H1 (cell line): ENCODE measurements at regions of chr6 and their contacts with region 1.

Region 1: DNA sequence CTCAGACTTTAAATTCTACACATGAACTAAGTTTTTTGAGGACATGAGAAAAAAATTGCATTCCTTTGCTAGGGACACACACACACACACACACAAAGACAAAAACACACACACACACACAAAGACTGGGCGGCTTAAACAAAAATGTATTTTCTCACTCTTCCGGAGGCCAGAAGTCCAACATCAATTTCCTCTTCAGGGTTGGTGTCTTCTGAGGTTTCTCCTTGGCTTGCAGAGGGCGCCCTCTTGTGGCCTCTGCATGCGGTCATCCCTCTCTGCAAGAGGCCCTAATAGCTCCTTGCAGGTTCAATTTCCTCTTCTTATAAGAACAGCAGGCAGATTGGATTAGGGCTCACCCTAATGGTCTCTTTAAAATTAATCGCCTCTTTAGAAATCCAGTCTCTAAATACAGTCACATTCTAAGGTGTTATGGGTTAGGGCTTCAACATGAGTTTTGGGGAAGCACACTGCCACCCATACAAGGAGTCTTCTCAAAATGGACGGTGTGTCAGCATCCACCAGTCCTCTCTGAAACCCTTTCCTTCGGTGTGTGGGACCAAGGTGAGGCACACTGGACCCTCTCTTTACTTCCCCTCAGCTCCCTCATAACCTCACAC is 61.4 kb downstream of the GPR6 start:
- DNase-seq: peak; percentile 84 to 86
- H3K4me3 ChIP-seq: peak overlapping the region; percentile 13 to 44 (median 26); a peak in 6 of 8 replicates
- H3K27ac ChIP-seq: no peak overlapping the region
- H3K4me1 ChIP-seq: peaks cover 0 to 3% (median 3%) of the 10 kb centered on the region in 4 experiments; a peak in 5 of 7 replicates
- H3K27me3 ChIP-seq: no peaks in the 10 kb centered on the region
- CTCF ChIP-seq: peak; percentile 79 to 94 (median 86)
- EP300 ChIP-seq: no peak
- POLR2A ChIP-seq: no peak
- RAD21 ChIP-seq: peak; percentile 94 to 96

Region 2: DNA sequence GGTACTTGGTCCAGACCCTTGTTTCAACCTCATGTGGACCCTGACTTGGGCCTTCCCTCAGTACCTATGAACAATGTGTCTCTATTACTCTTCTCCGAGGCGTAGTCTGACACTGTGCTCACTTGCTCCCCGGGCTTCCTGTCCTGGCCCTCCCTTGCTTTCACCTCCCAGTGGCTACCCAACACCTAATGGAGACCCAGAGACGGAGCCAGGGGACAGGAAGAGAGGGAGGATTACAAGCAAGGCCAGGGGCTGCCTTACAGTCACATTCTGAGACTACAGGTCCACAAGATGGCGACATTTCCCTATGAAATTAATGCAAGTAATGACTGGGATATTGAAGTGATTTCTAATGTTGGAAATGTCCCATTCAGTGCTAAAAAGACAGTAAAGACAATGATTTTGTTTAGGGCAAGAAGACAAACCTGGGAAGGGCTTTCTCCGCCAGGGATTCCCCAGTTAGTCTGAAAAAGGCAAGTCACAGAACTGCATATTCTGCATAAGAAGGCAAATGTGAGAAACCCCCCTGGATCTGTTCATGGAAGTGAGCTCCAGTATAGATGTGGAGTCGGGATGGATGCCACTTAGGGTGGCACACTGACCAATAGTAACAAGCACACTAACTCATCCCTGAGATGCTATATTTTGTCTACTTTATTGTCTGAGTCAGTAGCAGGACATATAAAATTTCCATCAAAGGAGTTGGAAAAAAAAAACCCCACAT is 512.4 kb before region 1 on chr6:
- CTCF ChIA-PET with region 1: interaction called, 11 read pairs
- POLR2A ChIA-PET with region 1: no interaction called
- DNase-seq: peak in 1 of 2 experiments; percentile 64
- H3K4me3 ChIP-seq: no peak overlapping the region
- H3K27ac ChIP-seq: no peak overlapping the region
- H3K4me1 ChIP-seq: peaks cover 0 to 3% (median 0%) of the 10 kb centered on the region in 4 experiments; a peak in 1 of 7 replicates
- H3K27me3 ChIP-seq: no peaks in the 10 kb centered on the region
- CTCF ChIP-seq: peak; percentile 36 to 74 (median 67)
- EP300 ChIP-seq: no peak
- POLR2A ChIP-seq: no peak
- RAD21 ChIP-seq: peak; percentile 83 to 85

Region 3: DNA sequence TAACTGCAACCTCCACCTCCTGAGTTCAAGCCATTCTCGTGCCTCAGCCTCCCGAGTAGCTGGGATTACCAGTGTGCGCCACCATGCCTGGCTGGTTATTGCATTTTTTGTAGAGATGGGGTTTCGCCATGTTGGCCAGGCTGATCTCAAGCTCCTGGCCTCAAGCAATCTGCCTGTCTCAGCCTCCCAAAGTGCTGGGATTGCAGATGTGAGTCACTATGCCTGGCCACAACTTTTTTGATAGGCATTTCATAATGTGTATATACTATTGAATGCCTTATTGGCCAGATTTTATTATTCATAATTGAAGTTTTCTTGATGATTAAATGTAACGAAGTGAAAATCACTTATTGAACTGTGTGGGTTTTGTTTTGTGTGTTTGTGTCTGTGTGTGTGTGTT is 320.5 kb before region 1 on chr6:
- CTCF ChIA-PET with region 1: interaction called, 19 read pairs
- POLR2A ChIA-PET with region 1: no interaction called
- DNase-seq: no peak
- H3K4me3 ChIP-seq: no peak overlapping the region
- H3K27ac ChIP-seq: no peak overlapping the region
- H3K4me1 ChIP-seq: no peaks in the 10 kb centered on the region
- H3K27me3 ChIP-seq: peaks cover 0 to 1% (median 0%) of the 10 kb centered on the region in 4 experiments; a peak in 1 of 7 replicates
- CTCF ChIP-seq: no peak
- EP300 ChIP-seq: no peak
- POLR2A ChIP-seq: no peak
- RAD21 ChIP-seq: no peak

Region 4: DNA sequence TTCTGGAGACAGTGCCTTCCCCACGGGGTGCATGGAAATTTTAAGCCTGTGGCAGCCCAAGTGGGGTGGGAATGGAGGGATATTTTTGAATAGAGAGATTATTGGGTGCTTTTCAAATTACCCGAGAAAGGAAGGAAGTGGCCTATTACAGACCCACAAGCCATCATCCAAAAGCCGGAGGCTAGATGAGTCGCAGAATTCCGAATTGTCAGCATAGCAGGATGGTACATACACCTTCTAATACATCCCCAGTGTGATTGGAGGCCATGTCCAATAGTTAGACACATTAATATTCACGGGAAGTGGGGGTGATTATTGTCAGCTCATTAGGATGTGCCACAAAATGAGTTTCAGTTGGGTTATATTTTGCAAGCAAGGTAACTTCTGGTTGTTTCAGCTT is 215.4 kb before region 1 on chr6:
- CTCF ChIA-PET with region 1: interaction called, 11 read pairs
- POLR2A ChIA-PET with region 1: no interaction called
- DNase-seq: no peak
- H3K4me3 ChIP-seq: no peak overlapping the region
- H3K27ac ChIP-seq: no peak overlapping the region
- H3K4me1 ChIP-seq: peaks cover 0 to 8% (median 3%) of the 10 kb centered on the region in 4 experiments; a peak in 5 of 7 replicates
- H3K27me3 ChIP-seq: no peaks in the 10 kb centered on the region
- CTCF ChIP-seq: no peak
- EP300 ChIP-seq: no peak
- POLR2A ChIP-seq: no peak
- RAD21 ChIP-seq: no peak

Region 5: DNA sequence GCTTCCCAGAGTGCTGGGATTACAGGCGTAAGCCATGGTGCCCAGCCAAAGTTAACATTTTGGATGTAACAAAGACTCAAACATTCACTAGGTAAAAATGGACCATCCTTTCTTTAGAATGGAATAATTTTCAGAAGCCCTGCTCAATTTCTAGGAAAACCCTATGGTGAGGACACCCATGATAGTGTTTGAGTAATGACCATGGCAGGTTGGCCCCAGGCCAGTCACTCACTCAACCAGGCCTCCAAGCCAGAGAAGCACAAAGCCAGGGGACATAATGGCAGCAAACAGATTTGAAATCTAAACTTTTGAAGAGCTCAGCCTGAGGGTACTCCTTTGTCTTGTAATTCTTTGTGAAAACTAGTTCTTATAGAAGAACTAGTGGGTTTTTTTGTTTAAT is 121.2 kb before region 1 on chr6:
- CTCF ChIA-PET with region 1: interaction called, 11 read pairs
- POLR2A ChIA-PET with region 1: no interaction called
- DNase-seq: no peak
- H3K4me3 ChIP-seq: no peak overlapping the region
- H3K27ac ChIP-seq: no peak overlapping the region
- H3K4me1 ChIP-seq: no peaks in the 10 kb centered on the region
- H3K27me3 ChIP-seq: no peaks in the 10 kb centered on the region
- CTCF ChIP-seq: no peak
- EP300 ChIP-seq: no peak
- POLR2A ChIP-seq: no peak
- RAD21 ChIP-seq: no peak

Region 6: GRCh38 chr6:110020888-110021287 is 18.6 kb before region 1 on chr6:
- CTCF ChIA-PET with region 1: interaction called, 35 read pairs
- POLR2A ChIA-PET with region 1: no interaction called
- DNase-seq: no peak
- H3K4me3 ChIP-seq: no peak overlapping the region
- H3K27ac ChIP-seq: no peak overlapping the region
- H3K4me1 ChIP-seq: no peaks in the 10 kb centered on the region
- H3K27me3 ChIP-seq: no peaks in the 10 kb centered on the region; a peak in 1 of 7 replicates
- CTCF ChIP-seq: no peak
- EP300 ChIP-seq: no peak
- POLR2A ChIP-seq: no peak
- RAD21 ChIP-seq: no peak

Region 7: GRCh38 chr6:110408891-110409290 is 369.4 kb after region 1 on chr6:
- CTCF ChIA-PET with region 1: no interaction called
- POLR2A ChIA-PET with region 1: no interaction called
- DNase-seq: no peak
- H3K4me3 ChIP-seq: no peak overlapping the region
- H3K27ac ChIP-seq: no peak overlapping the region
- H3K4me1 ChIP-seq: no peaks in the 10 kb centered on the region
- H3K27me3 ChIP-seq: no peaks in the 10 kb centered on the region; a peak in 1 of 7 replicates
- CTCF ChIP-seq: peak in 2 of 3 experiments; percentile 16 to 20; a peak in 3 of 4 replicates
- EP300 ChIP-seq: no peak
- POLR2A ChIP-seq: no peak
- RAD21 ChIP-seq: peak; percentile 9 to 36; a peak in 2 of 4 replicates